Activated CD4-positive, alpha-beta memory T cell treated with anti-CD3 and anti-CD28 coated beads, Interleukin-2, amount 10 ng/mL, durations not matched to agents 7 days and 5 days (primary cell): ENCODE measurements at regions of chr21 and their contacts with region 1.

Region 1: GRCh38 chr21:29091032-29091431 is 17.6 kb upstream of the CCT8 start:
- DNase-seq: no peak
- H3K4me3 Mint-ChIP-seq: no peak overlapping the region
- H3K27ac Mint-ChIP-seq: no peak overlapping the region
- H3K4me1 Mint-ChIP-seq: peaks cover 17% of the 10 kb centered on the region
- H3K27me3 Mint-ChIP-seq: peaks cover 3% of the 10 kb centered on the region

Region 2: DNA sequence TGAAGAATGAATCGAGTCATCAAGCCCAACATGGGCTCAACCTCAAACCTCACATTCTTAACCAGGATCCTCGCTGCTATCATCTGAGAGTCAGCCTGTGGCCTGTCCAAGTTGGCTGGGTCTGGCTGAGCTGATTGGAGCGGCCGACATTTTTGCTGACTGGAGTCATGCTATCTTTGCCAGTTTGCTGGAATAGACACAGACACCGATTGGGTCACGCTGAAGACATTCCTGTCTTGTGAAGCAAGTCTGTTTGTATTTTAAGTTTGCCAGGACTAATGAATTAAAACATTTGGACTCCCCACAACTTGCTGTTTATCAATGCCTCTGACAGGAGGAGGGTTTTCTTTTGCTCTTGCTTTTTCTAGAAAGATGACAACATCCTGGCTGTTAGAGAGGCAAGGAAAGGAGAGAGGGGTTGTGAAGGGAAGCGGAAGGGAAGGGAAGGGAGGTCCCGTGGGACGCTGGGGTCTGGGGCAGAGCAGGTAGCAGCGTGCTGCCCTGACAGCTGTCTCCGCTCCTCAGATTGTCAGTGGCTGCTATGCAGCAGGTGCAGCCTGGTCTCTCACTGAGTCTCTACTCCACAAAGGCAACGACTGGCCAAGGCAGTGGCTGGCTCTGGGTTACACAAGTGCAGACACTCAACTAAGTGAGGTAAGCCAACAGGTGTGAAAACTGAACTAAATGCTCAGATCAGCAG is 39.4 kb after region 1 on chr21 and contains the start of gene MAP3K7CL:
- CTCF ChIA-PET with region 1: no interaction called
- POLR2A ChIA-PET with region 1: no interaction called
- DNase-seq: no peak
- H3K4me3 Mint-ChIP-seq: no peak within 1 kb of the TSS
- H3K27ac Mint-ChIP-seq: no peak within 1 kb of the TSS
- H3K4me1 Mint-ChIP-seq: peaks cover 5% of the 10 kb centered on the region
- H3K27me3 Mint-ChIP-seq: peaks cover 2% of the 10 kb centered on the region
- total RNA-seq, gene MAP3K7CL: 6.7 to 7.7 TPM

Region 3: DNA sequence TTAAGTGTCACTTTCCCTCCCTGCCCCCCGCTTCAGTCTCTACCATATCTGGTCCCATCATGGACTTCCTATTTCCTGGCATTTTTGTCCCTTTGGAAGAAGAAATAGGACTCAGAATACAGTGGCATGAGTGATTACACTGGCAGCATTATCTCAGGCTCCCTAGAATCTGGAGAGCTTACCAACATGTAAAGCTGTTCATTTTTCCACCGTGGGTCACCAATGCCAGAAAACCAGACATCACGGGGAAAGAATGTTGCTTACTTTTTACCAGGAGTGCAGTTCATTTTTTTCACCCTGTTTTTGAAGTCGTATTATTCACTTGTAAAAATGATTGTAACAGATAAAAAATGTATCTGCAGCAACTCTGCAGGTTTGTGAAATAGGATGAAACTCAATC is 252.5 kb after region 1 on chr21:
- CTCF ChIA-PET with region 1: interaction called, 12 read pairs
- POLR2A ChIA-PET with region 1: no interaction called
- DNase-seq: no peak
- H3K4me3 Mint-ChIP-seq: no peak overlapping the region
- H3K27ac Mint-ChIP-seq: no peak overlapping the region
- H3K4me1 Mint-ChIP-seq: peaks cover 35% of the 10 kb centered on the region
- H3K27me3 Mint-ChIP-seq: no peaks in the 10 kb centered on the region